ENCODE measurements at regions of chr2 and their contacts with region 1.

Region 1: DNA sequence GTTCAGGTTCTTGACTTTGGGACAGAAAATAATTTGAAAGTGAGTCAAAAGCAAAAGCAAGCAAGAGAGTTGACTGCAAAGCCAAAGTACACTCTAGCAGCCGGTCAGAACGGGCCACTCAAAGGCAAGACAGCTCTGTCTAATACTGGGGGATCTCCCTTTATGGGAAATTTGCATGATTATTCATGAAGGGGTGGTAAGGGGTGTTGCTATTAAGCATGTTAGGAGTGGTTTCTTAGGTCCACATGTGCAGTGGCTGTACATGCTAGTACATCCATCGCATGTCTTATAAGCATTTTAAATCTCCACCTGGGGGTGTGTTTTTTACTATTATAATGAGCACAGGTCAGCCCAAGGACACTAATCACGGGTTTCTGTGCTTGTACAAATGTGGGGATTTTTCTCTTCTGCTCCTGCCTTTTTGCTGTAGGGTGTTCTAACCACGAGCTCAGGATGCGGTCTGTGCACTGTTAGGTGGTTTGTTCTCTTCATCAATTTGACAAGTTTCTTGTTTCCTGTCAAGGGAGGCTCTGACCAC is 60.2 kb upstream of the SPP2 start:
- DNase-seq: peak; percentile 89
- H3K4me3 Mint-ChIP-seq: peak overlapping the region; percentile 24
- H3K27ac Mint-ChIP-seq: peak overlapping the region; percentile 31
- H3K4me1 Mint-ChIP-seq: peaks cover 45% of the 10 kb centered on the region
- H3K27me3 Mint-ChIP-seq: peaks cover 12% of the 10 kb centered on the region

Region 2: GRCh38 chr2:234025466-234026185 is 35.3 kb after region 1 on chr2:
- CTCF ChIA-PET with region 1: no interaction called
- POLR2A ChIA-PET with region 1: interaction called, 24 read pairs
- DNase-seq: no peak
- H3K4me3 Mint-ChIP-seq: peak overlapping the region; percentile 62
- H3K27ac Mint-ChIP-seq: peak overlapping the region; percentile 50
- H3K4me1 Mint-ChIP-seq: peaks cover 42% of the 10 kb centered on the region
- H3K27me3 Mint-ChIP-seq: no peaks in the 10 kb centered on the region

Region 3: DNA sequence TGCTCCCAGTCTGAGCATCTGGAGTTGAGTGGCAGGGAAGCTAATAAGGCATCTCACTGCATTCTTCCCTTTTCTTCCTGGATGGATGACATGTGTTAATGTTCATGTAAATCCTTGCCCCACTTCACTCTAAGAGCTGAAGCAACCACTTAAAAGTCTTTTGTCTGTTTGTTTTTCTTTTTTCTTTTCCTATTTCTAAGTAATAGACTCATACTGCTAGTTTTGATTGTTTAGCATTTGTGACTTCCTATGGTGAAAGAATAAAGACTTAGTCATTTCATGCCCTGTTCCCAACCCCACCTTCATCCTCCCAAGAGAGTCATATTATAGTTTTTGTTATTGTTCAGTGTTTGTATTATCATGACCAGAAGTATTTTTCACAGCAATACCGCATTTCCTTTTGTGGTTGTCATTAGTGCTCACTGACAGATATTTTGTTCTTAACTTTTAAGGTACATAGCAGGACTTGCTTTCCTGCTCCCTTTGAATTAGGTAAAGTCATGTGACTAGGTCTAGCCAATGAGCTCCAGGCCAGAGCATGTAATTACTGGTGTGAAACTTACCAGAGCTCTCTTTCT is 42.0 kb after region 1 on chr2:
- CTCF ChIA-PET with region 1: interaction called, 7 read pairs
- POLR2A ChIA-PET with region 1: interaction called, 24 read pairs
- DNase-seq: peak; percentile 81
- H3K4me3 Mint-ChIP-seq: peak overlapping the region; percentile 12
- H3K27ac Mint-ChIP-seq: peak overlapping the region; percentile 86
- H3K4me1 Mint-ChIP-seq: peaks cover 44% of the 10 kb centered on the region
- H3K27me3 Mint-ChIP-seq: peaks cover 10% of the 10 kb centered on the region

Region 4: DNA sequence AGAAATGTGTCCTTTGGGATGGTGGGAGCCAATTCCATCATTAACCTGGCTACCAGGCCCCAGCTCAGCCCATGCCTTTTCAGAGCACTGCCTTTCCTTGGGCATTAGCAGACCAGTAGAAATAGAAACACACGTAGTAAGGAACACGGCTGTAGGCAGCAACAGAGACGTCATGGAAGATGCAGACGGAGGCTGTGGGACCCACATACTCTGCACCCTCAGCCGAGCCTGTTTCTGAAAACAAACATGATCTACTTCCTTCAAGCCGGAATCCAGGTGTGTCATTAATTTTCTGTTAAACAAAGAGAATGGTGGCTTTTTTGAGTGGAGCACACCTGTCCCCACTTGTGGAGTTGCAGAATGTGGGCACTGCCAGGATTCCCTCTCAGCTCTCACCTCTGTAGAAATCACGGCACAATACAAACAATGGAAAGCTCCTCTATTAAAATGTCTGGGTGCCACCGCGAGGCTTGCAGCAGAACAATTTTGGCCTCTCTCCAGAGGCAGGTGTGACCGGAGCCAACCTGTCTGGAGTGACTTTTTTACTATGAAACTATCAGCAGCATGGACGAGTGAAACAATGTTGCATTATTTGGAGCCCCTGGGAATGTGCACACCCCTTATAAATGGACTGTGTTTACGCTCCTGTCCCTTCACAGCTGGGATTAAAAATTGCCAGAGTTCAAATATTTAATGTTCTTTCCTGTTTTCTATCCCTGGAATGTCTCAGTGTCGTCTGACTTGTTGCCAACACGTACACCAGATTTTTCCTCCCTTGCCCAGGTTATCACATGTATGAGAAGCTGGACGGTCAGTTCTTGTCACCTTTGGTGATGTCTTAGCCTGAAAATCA is 91.9 kb after region 1 on chr2:
- CTCF ChIA-PET with region 1: no interaction called
- POLR2A ChIA-PET with region 1: no interaction called
- DNase-seq: no peak
- H3K4me3 Mint-ChIP-seq: no peak overlapping the region
- H3K27ac Mint-ChIP-seq: no peak overlapping the region
- H3K4me1 Mint-ChIP-seq: peaks cover 1% of the 10 kb centered on the region
- H3K27me3 Mint-ChIP-seq: peaks cover 21% of the 10 kb centered on the region